ENCODE measurements at regions of chr1 and their contacts with region 1.

Region 1: DNA sequence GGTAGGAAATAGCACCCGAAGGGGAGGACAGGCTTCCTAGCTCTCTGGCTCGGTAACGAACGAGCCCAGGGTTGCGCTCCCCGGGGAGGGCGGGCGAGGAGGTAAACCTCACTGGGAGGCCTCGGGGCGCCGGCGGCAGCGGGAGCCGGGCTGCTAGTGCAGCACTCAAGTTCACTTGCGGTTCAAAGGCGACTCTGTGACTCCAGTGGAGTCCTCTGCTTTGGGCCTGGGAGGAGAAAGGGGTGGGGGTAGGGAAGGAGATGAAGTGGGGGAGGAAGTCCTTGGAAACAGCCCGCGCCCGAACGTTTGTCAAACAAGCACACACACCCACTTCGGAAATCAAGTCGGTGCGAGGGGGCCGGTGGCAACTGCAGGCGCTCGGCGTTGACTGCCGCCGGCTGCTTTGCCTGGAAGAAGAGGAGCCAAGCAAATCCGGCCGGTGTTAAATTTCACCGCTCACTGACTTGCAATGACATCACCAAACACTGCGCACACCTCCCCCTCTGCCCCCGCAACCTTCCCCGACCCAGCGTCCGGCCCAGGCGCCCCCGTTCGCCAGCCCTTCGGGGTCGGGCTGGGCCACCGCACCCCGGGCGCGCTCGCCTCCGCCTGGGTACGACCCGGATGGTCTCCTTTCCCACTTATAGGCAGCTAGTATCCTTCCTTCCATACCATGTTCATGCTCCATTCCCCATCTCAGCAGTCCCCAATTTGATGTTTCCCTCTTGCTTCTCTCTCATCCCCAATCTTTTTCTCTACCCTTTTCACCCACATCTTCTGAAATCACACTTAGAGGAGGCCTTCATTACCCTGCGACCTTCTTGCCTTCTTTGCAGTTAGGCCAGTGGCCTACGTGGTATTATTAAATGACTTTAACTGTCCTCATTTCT is at the start of gene COL24A1:
- DNase-seq: peak; percentile 83
- ATAC-seq: peak; percentile 70
- H3K4me3 ChIP-seq: peak within 1 kb of the TSS; percentile 37
- H3K27ac ChIP-seq: peak within 1 kb of the TSS; percentile 83
- H3K4me1 ChIP-seq: peaks cover 22% of the 10 kb centered on the region
- H3K27me3 ChIP-seq: no peaks in the 10 kb centered on the region
- CTCF ChIP-seq: no peak
- POLR2A ChIP-seq: no peak
- RAD21 ChIP-seq: no peak
- total RNA-seq, gene COL24A1: 1.4 and 2.5 TPM in 2 replicates

Region 2: DNA sequence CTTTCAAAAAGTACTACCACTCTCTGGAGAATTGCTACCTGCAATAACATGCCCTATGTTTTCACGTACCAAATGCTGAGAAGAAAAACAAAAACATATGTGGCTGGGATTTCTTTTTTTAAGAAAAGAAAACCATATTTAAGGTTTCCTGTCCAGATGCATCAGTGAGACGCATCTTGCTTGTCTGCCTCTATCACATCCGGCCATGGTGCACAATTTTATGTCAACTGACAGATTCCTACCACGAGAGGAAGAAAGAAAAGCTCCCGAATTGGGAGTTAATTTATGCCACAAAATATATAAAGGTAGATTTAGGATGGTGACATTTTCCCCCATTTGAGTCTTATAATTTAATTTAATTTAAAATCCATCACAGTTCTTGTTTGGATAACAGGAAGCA is 62.0 kb after region 1 on chr1:
- CTCF ChIA-PET with region 1: no interaction called
- POLR2A ChIA-PET with region 1: no interaction called
- dilution Hi-C with region 1: no loop called
- in situ Hi-C with region 1: loop called (anchors 10 kb)
- intact Hi-C with region 1: no loop called
- DNase-seq: no peak
- ATAC-seq: no peak
- H3K4me3 ChIP-seq: no peak overlapping the region
- H3K27ac ChIP-seq: no peak overlapping the region
- H3K4me1 ChIP-seq: no peaks in the 10 kb centered on the region
- H3K27me3 ChIP-seq: no peaks in the 10 kb centered on the region
- CTCF ChIP-seq: no peak
- POLR2A ChIP-seq: no peak
- RAD21 ChIP-seq: no peak

Measured in IMR-90 (cell line).